Activated CD8-positive, alpha-beta memory T cell treated with anti-CD3 and anti-CD28 coated beads, Interleukin-2, amount 10 ng/mL, durations not matched to agents 7 days and 5 days (primary cell): ENCODE measurements at regions of chr17 and their contacts with region 1.

Region 1: DNA sequence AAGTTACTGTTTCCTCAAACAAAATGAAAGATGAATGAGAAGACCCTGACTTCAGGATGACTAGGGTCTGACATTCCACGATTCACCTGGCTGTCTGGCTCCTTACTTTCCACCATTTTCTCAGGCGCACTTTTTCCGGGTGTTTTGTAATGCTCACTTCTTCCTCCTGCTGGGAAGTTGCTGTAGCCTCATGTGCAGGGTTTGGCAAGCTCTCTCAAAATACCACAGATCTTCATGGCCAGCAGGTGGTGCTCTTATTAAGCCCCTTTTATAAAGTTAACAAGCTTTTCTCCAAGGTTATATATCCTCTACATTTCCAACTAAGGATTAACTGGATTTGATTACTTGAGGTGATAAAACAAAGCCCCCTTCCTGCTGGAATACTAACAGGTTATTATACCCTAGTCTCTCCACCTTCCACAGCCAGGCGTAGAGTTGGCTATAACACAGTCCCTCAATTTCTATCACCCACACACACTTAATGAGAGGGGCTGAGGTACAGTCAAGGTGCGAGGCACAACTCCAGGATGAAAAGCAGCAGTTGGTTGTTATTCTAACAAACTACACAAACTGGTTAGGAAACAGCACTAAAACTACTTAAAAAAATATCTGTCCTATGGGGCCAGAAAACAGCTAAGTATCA is 45.4 kb downstream of the STH start:
- DNase-seq: peak; percentile 69
- ATAC-seq: no peak
- H3K4me3 Mint-ChIP-seq: no peak overlapping the region
- H3K27ac Mint-ChIP-seq: peak overlapping the region; percentile 6
- H3K4me1 Mint-ChIP-seq: peaks cover 9% of the 10 kb centered on the region
- H3K27me3 Mint-ChIP-seq: no peaks in the 10 kb centered on the region

Region 2: DNA sequence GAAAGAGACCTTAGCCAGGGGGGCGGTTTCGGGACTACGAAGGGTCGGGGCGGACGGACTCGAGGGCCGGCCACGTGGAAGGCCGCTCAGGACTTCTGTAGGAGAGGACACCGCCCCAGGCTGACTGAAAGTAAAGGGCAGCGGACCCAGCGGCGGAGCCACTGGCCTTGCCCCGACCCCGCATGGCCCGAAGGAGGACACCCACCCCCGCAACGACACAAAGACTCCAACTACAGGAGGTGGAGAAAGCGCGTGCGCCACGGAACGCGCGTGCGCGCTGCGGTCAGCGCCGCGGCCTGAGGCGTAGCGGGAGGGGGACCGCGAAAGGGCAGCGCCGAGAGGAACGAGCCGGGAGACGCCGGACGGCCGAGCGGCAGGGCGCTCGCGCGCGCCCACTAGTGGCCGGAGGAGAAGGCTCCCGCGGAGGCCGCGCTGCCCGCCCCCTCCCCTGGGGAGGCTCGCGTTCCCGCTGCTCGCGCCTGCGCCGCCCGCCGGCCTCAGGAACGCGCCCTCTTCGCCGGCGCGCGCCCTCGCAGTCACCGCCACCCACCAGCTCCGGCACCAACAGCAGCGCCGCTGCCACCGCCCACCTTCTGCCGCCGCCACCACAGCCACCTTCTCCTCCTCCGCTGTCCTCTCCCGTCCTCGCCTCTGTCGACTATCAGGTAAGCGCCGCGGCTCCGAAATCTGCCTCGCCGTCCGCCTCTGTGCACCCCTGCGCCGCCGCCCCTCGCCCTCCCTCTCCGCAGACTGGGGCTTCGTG is 150.2 kb before region 1 on chr17 and contains the start of gene MAPT:
- CTCF ChIA-PET with region 1: no interaction called
- DNase-seq: peak; percentile 78
- ATAC-seq: peak; percentile 89
- H3K4me3 Mint-ChIP-seq: peak within 1 kb of the TSS; percentile 70
- H3K27ac Mint-ChIP-seq: peak within 1 kb of the TSS; percentile 24
- H3K4me1 Mint-ChIP-seq: peaks cover 14% of the 10 kb centered on the region
- H3K27me3 Mint-ChIP-seq: peaks cover 76% of the 10 kb centered on the region
- total RNA-seq, gene MAPT: 0.15 TPM in 1 of 2 experiments, not detected in the other

Region 3: GRCh38 chr17:45942284-45942683 is 102.1 kb before region 1 on chr17:
- CTCF ChIA-PET with region 1: no interaction called
- DNase-seq: no peak
- ATAC-seq: no peak
- H3K4me3 Mint-ChIP-seq: no peak overlapping the region
- H3K27ac Mint-ChIP-seq: no peak overlapping the region
- H3K4me1 Mint-ChIP-seq: no peaks in the 10 kb centered on the region
- H3K27me3 Mint-ChIP-seq: peaks cover 48% of the 10 kb centered on the region

Region 4: DNA sequence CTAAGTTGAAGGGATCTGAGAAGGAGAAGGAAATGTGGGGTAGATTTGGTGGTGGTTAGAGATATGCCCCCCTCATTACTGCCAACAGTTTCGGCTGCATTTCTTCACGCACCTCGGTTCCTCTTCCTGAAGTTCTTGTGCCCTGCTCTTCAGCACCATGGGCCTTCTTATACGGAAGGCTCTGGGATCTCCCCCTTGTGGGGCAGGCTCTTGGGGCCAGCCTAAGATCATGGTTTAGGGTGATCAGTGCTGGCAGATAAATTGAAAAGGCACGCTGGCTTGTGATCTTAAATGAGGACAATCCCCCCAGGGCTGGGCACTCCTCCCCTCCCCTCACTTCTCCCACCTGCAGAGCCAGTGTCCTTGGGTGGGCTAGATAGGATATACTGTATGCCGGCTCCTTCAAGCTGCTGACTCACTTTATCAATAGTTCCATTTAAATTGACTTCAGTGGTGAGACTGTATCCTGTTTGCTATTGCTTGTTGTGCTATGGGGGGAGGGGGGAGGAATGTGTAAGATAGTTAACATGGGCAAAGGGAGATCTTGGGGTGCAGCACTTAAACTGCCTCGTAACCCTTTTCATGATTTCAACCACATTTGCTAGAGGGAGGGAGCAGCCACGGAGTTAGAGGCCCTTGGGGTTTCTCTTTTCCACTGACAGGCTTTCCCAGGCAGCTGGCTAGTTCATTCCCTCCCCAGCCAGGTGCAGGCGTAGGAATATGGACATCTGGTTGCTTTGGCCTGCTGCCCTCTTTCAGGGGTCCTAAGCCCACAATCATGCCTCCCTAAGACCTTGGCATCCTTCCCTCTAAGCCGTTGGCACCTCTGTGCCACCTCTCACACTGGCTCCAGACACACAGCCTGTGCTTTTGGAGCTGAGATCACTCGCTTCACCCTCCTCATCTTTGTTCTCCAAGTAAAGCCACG is 17.1 kb before region 1 on chr17:
- CTCF ChIA-PET with region 1: interaction called, 26 read pairs
- DNase-seq: no peak
- ATAC-seq: no peak
- H3K4me3 Mint-ChIP-seq: no peak overlapping the region
- H3K27ac Mint-ChIP-seq: peak overlapping the region; percentile 53
- H3K4me1 Mint-ChIP-seq: peaks cover 7% of the 10 kb centered on the region
- H3K27me3 Mint-ChIP-seq: no peaks in the 10 kb centered on the region

Region 5: GRCh38 chr17:46154151-46154816 is 109.9 kb after region 1 on chr17:
- CTCF ChIA-PET with region 1: interaction called, 10 read pairs
- DNase-seq: peak; percentile 53
- ATAC-seq: peak; percentile 61
- H3K4me3 Mint-ChIP-seq: peak overlapping the region; percentile 50
- H3K27ac Mint-ChIP-seq: peak overlapping the region; percentile 83
- H3K4me1 Mint-ChIP-seq: peaks cover 76% of the 10 kb centered on the region
- H3K27me3 Mint-ChIP-seq: no peaks in the 10 kb centered on the region

Region 6: GRCh38 chr17:46193626-46194392 is 149.4 kb after region 1 on chr17:
- CTCF ChIA-PET with region 1: interaction called, 19 read pairs
- DNase-seq: peak; percentile 97
- ATAC-seq: peak; percentile 74
- H3K4me3 Mint-ChIP-seq: peak overlapping the region; percentile 85
- H3K27ac Mint-ChIP-seq: peak overlapping the region; percentile 98
- H3K4me1 Mint-ChIP-seq: peaks cover 62% of the 10 kb centered on the region
- H3K27me3 Mint-ChIP-seq: no peaks in the 10 kb centered on the region

Region 7: DNA sequence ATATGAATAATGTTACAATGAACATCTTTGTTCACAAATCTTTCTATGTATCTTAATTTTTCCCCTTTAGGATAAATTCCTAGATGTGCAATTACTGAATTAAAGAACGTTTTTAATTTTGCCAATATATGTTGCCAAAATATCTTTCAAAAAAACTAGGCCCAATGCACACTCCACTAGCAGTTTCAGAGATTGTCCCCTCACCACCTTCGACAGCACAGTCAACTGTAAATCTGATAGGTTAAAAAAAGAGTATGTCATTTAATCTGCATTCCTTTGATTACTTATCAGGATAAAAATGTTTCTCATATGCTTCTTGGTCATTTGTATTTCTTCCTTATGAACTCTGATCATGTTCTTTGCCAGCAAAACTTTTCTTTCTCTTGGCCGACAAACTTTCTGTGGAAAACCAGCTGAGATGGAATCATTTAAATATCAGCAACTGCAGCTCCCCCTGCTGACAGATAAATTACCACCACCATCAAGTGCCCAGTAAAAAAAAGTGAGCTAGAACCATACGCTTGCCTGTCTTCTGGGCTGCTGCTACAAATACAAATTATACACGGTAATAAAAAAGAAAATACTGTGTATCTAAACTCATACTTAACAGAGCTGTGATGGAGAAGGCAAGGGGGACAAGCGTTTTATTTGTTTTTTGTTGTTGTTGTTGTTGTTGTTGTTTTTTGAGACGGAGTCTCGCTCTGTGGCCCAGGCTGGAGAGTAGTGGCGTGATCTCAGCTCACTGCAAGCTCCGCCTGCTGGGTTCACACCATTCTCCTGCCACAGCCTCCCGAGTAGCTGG is 168.4 kb after region 1 on chr17:
- CTCF ChIA-PET with region 1: interaction called, 57 read pairs
- DNase-seq: peak; percentile 71
- ATAC-seq: peak; percentile 87
- H3K4me3 Mint-ChIP-seq: no peak overlapping the region
- H3K27ac Mint-ChIP-seq: no peak overlapping the region
- H3K4me1 Mint-ChIP-seq: peaks cover 17% of the 10 kb centered on the region
- H3K27me3 Mint-ChIP-seq: no peaks in the 10 kb centered on the region